KBM-7 (cell line): ENCODE measurements at regions of chr6 and their contacts with region 1.

Region 1: DNA sequence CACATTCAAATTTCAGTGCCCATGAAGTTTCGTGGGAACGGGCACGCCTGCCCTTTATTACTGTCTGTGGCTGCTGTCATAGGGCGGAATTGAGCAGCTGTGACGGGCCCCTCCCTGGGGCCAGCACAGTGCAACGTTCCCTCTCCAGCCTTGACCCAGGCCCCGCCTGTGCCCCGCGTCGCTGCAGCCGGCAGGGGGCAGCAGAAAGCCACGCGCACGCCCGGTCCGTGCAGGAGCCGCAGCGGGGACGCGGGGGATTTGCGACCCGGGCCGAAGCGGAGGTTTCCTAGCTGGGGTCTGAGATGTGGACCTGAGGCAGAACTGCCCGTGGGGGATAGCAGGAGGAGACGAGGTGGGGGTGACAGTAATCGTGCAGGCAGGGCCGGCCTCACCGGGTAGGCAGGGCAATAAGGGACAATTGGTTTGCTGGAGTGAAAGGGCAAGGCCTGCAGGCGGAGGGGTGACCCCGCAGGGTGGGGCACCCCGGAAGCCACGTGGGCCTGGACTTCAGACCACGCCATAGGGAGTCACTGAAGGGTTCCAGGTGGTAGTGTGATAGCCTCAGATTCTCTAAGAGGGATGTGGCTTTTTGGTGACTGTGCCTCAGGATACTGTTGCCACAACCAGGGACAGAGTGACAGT is 54.4 kb downstream of the SYTL3 start:
- DNase-seq: peak; percentile 87

Region 2: DNA sequence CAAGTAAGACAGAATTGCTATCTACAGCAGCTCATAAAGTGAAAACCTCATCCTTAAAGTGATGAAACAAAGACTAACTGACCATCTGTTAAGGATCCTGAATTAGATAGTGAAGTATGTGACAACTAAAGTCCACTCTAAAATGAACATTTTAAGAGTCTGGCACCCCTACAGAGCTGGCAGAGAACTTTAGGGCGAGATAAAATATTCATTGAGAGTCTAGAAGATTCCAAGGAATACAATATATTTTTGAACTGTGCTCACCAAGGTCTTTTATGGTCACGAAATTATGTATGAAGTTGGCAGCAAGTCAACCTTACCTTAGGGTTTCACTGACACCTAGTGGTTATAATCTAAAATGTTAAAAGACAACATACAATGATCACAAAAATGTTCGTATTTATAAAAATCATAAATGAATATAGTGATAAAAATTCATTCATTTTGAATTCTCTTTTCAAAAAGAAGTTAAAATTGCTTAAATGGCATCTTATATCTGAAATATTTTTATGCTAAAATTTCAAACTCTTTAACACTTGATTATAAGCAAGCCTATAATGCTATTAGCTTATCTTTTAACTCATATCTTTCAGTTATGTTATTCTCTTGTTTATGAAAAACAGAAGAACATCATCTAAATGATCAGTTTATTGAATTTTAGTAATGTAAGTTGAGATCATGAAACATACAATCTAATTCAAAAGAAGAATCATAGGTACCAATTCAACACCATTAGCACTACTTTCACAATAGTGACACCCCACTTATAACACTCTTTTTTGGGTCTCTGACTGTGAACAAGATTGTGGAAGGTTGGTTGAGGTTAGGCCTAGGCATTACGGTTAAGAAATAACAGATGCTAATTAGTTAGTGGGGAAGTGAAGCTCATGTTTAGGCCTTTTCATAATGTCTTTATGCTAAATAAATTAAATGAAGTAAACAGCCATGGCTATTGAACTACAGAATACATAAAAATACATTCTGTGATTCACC is 268.2 kb after region 1 on chr6:
- in situ Hi-C with region 1: loop called (anchors 25 kb)
- DNase-seq: peak; percentile 70

Region 3: GRCh38 chr6:159056003-159056402 is 351.7 kb after region 1 on chr6:
- in situ Hi-C with region 1: no loop called
- DNase-seq: peak; percentile 93

Region 4: DNA sequence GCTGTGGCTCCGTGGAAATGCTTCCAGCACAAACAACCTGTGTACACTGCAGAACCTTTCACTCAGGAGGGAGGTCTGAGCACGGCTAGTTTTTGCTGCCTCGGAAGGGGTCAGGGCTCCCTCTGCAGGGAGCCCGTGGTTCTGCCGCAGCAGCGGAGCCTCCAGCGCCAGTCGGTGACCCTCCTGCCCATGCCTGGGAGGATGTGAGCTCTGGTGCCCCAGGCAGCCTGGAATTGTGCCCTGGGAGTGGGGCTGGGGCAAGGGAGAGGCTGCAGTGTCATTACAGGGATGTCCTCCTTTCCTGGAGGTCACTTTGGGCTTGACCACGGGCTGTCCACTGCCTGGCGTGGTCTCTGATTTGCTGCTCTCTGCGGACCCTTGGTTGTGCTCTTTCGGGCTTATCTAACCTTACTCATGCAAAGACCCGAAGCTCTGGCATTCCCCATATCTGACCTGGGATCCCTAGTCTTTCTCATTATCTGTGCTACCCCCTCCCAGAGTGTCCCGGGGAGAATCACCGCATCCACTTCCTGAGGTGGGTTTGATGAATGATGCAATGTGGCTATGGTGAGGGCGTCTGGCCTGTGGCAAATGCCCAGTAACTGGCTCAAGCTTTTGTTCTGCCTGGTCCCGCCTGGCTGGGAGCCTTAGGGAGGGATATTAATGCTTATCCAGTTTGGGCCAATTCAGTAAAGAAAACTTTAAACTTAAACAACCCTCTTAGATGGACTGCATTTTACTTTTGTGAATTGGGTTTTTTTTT is 400.0 kb after region 1 on chr6:
- in situ Hi-C with region 1: loop called (anchors 25 kb)
- DNase-seq: peak; percentile 81